ENCODE measurements at regions of chr1 and their contacts with region 1.

Region 1: DNA sequence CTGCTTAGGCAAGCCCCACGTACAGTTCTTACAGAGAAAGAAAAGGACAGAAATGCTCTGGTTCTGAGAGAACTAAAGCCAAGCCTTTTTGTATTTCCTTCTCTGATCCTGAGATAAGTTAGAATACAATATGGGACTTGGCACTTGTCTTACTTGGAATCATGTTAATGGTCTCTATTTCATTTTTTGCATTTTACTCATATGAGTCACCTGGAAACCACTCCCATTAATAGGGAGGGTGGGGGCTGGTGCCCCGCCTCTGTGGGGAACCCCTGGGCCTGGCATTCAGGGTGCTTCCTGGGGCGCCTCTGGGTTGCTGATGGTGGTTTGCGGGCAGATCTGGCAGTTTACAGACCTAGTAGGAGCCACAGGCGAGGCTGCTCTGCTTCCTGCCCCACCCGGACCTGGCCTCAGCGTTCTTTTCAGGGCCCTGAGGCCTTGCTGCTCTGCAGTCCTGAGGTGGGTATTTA is 26.7 kb downstream of the TSPAN2 start:
- DNase-seq: peak; percentile 95 to 99 (median 97)
- H3K4me3 ChIP-seq: peak overlapping the region in 1 of 2 donors; percentile 33
- H3K4me3 Mint-ChIP-seq: peak overlapping the region; percentile 77 to 91 (median 84)
- H3K27ac ChIP-seq: peak overlapping the region; percentile 79
- H3K27ac Mint-ChIP-seq: peak overlapping the region; percentile 98 to 100 (median 100)
- H3K4me1 ChIP-seq: peaks cover 44% of the 10 kb centered on the region
- H3K4me1 Mint-ChIP-seq: peaks cover 43 to 57% (median 49%) of the 10 kb centered on the region in 4 donors
- H3K27me3 ChIP-seq: no peaks in the 10 kb centered on the region
- H3K27me3 Mint-ChIP-seq: no peaks in the 10 kb centered on the region

Region 2: DNA sequence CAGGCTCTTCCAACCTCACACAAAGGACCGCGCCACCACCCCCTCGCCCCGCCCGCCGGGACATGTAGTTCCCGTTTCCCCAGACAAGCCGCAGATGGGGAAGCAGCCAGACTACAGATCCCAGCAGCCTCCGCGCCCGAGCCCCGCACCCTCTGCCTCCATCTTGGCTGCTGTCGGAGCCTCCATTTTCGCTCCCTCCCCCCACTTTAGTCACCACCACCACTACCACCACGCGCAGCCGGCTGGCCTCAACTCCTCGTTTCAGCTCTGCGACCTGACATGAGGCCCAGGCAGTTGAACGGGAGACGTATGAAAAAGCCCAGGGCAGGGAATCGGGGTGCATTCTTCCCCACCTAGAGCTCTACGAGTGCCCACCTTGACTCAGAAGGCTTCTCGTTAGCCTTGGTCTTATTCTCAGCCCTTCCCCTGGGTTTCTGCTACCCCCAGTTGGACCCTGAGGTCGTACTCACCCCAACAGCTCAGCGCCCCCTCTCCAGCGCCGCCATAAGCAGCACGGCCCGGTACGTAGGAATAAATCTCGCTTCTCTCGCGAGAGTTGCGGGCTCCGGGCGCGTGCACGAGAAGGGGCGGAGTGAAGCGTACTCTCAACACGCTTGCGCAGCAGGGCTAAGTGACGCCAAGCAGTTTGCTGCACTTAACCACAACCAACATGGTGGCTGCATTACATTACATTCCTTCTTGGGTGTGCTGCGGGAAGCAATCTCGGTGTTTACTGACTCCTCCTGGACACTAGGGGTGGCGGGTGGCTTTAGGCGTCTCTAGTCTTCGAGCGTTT is 304.9 kb before region 1 on chr1 and contains the start of gene CSDE1:
- CTCF ChIA-PET with region 1: no interaction called
- POLR2A ChIA-PET with region 1: interaction called, 3 read pairs
- intact Hi-C with region 1: loop called (anchors 2 kb)
- DNase-seq: peak; percentile 96 to 98 (median 97)
- H3K4me3 ChIP-seq: peak within 1 kb of the TSS; percentile 97 to 99
- H3K4me3 Mint-ChIP-seq: peak within 1 kb of the TSS; percentile 97 to 100 (median 100)
- H3K27ac ChIP-seq: peak within 1 kb of the TSS; percentile 100
- H3K27ac Mint-ChIP-seq: peak within 1 kb of the TSS; percentile 100
- H3K4me1 ChIP-seq: peaks cover 52% of the 10 kb centered on the region
- H3K4me1 Mint-ChIP-seq: peaks cover 43 to 62% (median 49%) of the 10 kb centered on the region in 4 donors
- H3K27me3 ChIP-seq: no peaks in the 10 kb centered on the region
- H3K27me3 Mint-ChIP-seq: no peaks in the 10 kb centered on the region
- total RNA-seq, gene CSDE1: 530 to 559 TPM

Region 3: GRCh38 chr1:114780344-114781226 is 282.0 kb before region 1 on chr1 and contains the start of gene SIKE1:
- CTCF ChIA-PET with region 1: no interaction called
- POLR2A ChIA-PET with region 1: no interaction called
- intact Hi-C with region 1: loop called (anchors 1 kb)
- DNase-seq: peak; percentile 93 to 98 (median 96)
- H3K4me3 ChIP-seq: peak within 1 kb of the TSS; percentile 77 to 83
- H3K4me3 Mint-ChIP-seq: peak within 1 kb of the TSS; percentile 95 to 100 (median 100)
- H3K27ac ChIP-seq: peak within 1 kb of the TSS; percentile 97
- H3K27ac Mint-ChIP-seq: peak within 1 kb of the TSS; percentile 93 to 100 (median 100)
- H3K4me1 ChIP-seq: peaks cover 18% of the 10 kb centered on the region
- H3K4me1 Mint-ChIP-seq: peaks cover 14 to 36% (median 26%) of the 10 kb centered on the region in 4 donors
- H3K27me3 ChIP-seq: no peaks in the 10 kb centered on the region
- H3K27me3 Mint-ChIP-seq: no peaks in the 10 kb centered on the region
- total RNA-seq, gene SIKE1: 66.6 to 67.1 TPM

Region 4: GRCh38 chr1:114979278-114979891 is 83.2 kb before region 1 on chr1:
- CTCF ChIA-PET with region 1: no interaction called
- POLR2A ChIA-PET with region 1: no interaction called
- intact Hi-C with region 1: loop called (anchors 1 kb)
- DNase-seq: peak; percentile 57 to 67 (median 64)
- H3K4me3 ChIP-seq: no peak overlapping the region
- H3K4me3 Mint-ChIP-seq: no peak overlapping the region
- H3K27ac ChIP-seq: no peak overlapping the region
- H3K27ac Mint-ChIP-seq: no peak overlapping the region
- H3K4me1 ChIP-seq: no peaks in the 10 kb centered on the region
- H3K4me1 Mint-ChIP-seq: no peaks in the 10 kb centered on the region
- H3K27me3 ChIP-seq: no peaks in the 10 kb centered on the region
- H3K27me3 Mint-ChIP-seq: peaks cover 10 to 12% of the 10 kb centered on the region in 2 donors

Region 5: GRCh38 chr1:115089420-115090185 is 27.0 kb after region 1 on chr1 and contains the start of gene TSPAN2:
- CTCF ChIA-PET with region 1: interaction called, 4 read pairs
- POLR2A ChIA-PET with region 1: interaction called, 8 read pairs
- intact Hi-C with region 1: loop called (anchors 1 kb)
- DNase-seq: peak; percentile 61 to 69 (median 64)
- H3K4me3 ChIP-seq: peak within 1 kb of the TSS; percentile 36 to 63
- H3K4me3 Mint-ChIP-seq: peak within 1 kb of the TSS; percentile 84 to 91 (median 87)
- H3K27ac ChIP-seq: peak within 1 kb of the TSS; percentile 61
- H3K27ac Mint-ChIP-seq: peak within 1 kb of the TSS; percentile 74 to 93 (median 90)
- H3K4me1 ChIP-seq: peaks cover 35% of the 10 kb centered on the region
- H3K4me1 Mint-ChIP-seq: peaks cover 35 to 60% (median 47%) of the 10 kb centered on the region in 4 donors
- H3K27me3 ChIP-seq: no peaks in the 10 kb centered on the region
- H3K27me3 Mint-ChIP-seq: no peaks in the 10 kb centered on the region
- total RNA-seq, gene TSPAN2: 1.3 to 3.5 TPM

Region 6: DNA sequence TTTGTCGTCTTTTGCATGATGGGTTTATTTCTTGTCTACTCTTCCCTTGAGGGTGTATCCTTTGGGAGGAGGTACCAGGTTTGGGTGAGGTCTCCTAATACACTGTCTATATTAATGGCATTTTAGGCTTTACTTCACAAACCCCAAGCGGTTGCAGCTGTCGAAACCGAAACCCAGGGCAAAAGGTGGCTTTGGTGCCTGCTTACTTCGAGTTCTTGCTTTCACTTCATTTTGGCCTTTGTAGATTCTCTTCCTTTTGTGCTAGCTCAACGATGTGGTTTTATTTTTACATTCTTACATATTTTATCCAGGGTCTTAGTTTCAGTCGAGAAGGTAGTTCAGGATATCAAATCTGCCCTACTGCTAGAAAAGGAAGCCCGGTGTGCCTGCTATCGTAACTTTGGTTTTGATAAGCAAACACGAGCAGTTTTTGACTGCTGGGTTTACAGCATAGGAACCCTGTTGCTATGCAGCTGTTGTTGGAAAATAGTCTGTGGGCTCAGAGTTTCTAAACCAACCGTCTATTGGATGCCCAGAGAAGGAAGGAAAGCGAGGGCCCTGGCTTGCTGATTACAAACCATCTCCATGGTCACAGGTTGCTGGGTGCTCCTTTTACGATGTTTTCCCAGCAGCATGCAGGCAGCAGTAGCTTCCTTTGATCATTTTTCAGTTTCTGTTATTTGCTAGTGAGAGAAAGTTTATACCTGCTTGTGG is 36.6 kb after region 1 on chr1:
- CTCF ChIA-PET with region 1: interaction called, 4 read pairs
- POLR2A ChIA-PET with region 1: interaction called, 66 read pairs
- intact Hi-C with region 1: loop called (anchors 1 kb)
- DNase-seq: peak; percentile 88 to 96 (median 94)
- H3K4me3 ChIP-seq: peak overlapping the region; percentile 38 to 58
- H3K4me3 Mint-ChIP-seq: peak overlapping the region; percentile 87 to 99 (median 95)
- H3K27ac ChIP-seq: peak overlapping the region; percentile 89
- H3K27ac Mint-ChIP-seq: peak overlapping the region; percentile 94 to 100 (median 100)
- H3K4me1 ChIP-seq: peaks cover 40% of the 10 kb centered on the region
- H3K4me1 Mint-ChIP-seq: peaks cover 45 to 64% (median 53%) of the 10 kb centered on the region in 4 donors
- H3K27me3 ChIP-seq: no peaks in the 10 kb centered on the region
- H3K27me3 Mint-ChIP-seq: no peaks in the 10 kb centered on the region

Region 7: GRCh38 chr1:115112496-115113375 is 50.2 kb after region 1 on chr1:
- CTCF ChIA-PET with region 1: interaction called, 16 read pairs
- POLR2A ChIA-PET with region 1: interaction called, 3 read pairs
- intact Hi-C with region 1: no loop called
- DNase-seq: peak in 4 of 5 donors; percentile 39 to 60 (median 46)
- H3K4me3 ChIP-seq: no peak overlapping the region
- H3K4me3 Mint-ChIP-seq: no peak overlapping the region
- H3K27ac ChIP-seq: no peak overlapping the region
- H3K27ac Mint-ChIP-seq: peak overlapping the region in 6 of 7 donors; percentile 12 to 69 (median 46)
- H3K4me1 ChIP-seq: peaks cover 18% of the 10 kb centered on the region
- H3K4me1 Mint-ChIP-seq: peaks cover 9 to 25% (median 18%) of the 10 kb centered on the region in 4 donors
- H3K27me3 ChIP-seq: no peaks in the 10 kb centered on the region
- H3K27me3 Mint-ChIP-seq: no peaks in the 10 kb centered on the region

Region 8: GRCh38 chr1:115179397-115179835 is 116.8 kb after region 1 on chr1:
- CTCF ChIA-PET with region 1: no interaction called
- POLR2A ChIA-PET with region 1: no interaction called
- intact Hi-C with region 1: no loop called
- DNase-seq: no peak
- H3K4me3 ChIP-seq: no peak overlapping the region
- H3K4me3 Mint-ChIP-seq: no peak overlapping the region
- H3K27ac ChIP-seq: no peak overlapping the region
- H3K27ac Mint-ChIP-seq: no peak overlapping the region
- H3K4me1 ChIP-seq: no peaks in the 10 kb centered on the region
- H3K4me1 Mint-ChIP-seq: peaks cover 0 to under 1% (median 0%) of the 10 kb centered on the region in 4 donors
- H3K27me3 ChIP-seq: no peaks in the 10 kb centered on the region
- H3K27me3 Mint-ChIP-seq: peaks cover 6 to 11% of the 10 kb centered on the region in 2 donors